Activated CD4-positive, alpha-beta memory T cell treated with anti-CD3 and anti-CD28 coated beads, Interleukin-2, amount 10 ng/mL, durations not matched to agents 7 days and 5 days (primary cell): ENCODE measurements at regions of chr14 and their contacts with region 1.

Region 1: GRCh38 chr14:102524466-102525218 is 15.1 kb upstream of the ANKRD9 start:
- DNase-seq: peak; percentile 97
- H3K4me3 Mint-ChIP-seq: peak overlapping the region; percentile 82
- H3K27ac Mint-ChIP-seq: peak overlapping the region; percentile 81
- H3K4me1 Mint-ChIP-seq: peaks cover 42% of the 10 kb centered on the region
- H3K27me3 Mint-ChIP-seq: no peaks in the 10 kb centered on the region

Region 2: GRCh38 chr14:102509744-102510615 is 14.7 kb before region 1 on chr14 and contains the start of gene ANKRD9:
- CTCF ChIA-PET with region 1: interaction called, 13 read pairs
- POLR2A ChIA-PET with region 1: interaction called, 4 read pairs
- DNase-seq: peak; percentile 92
- H3K4me3 Mint-ChIP-seq: peak within 1 kb of the TSS; percentile 75
- H3K27ac Mint-ChIP-seq: no peak within 1 kb of the TSS
- H3K4me1 Mint-ChIP-seq: peaks cover 17% of the 10 kb centered on the region
- H3K27me3 Mint-ChIP-seq: no peaks in the 10 kb centered on the region
- total RNA-seq, gene ANKRD9: 11.2 to 12.3 TPM

Region 3: DNA sequence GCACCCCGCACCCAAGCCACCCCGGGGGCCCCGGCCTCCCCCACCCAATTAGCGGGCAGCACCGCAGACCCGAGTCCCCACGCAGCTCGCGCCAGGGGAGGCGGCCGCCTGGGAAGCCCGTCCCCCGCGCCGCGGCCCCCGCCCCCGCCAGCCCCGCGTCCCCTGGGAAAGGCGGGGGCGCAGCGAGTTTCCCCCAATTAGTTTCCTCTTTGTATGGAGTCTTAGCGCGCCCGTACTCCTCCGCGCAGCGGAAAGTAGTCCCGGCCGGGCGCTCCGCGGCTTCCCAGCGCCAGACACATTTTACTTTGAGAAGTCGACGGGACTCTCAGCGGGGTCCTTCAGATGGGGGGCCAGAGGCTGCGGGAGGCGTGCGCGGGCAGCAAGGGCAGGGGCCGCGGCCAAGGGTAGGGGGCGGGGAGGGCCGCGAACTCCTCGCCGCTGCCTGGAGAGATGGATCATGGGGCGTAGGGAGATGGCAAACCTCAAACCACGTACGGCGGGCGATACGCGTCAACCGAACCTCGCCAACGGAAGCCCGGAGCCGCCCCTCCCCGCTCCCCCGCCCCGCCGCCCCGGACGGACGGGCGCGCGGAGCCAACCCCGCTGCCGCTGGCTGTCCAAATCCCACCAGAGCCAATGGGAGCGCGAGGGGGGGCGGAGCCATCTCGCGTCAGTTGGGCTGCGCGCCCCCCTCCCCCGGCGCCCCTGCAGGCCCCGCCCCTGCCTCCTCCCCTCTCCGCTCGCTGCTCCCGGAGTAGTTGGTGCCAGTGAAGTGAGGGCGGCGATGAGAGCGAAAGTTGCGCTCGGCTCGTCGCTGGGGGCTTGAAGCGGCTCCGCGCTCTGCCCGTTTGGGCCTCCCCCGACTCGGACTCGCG is 67.5 kb after region 1 on chr14 and contains the start of gene RCOR1:
- CTCF ChIA-PET with region 1: interaction called, 29 read pairs
- POLR2A ChIA-PET with region 1: interaction called, 23 read pairs
- DNase-seq: peak; percentile 98
- H3K4me3 Mint-ChIP-seq: peak within 1 kb of the TSS; percentile 91
- H3K27ac Mint-ChIP-seq: peak within 1 kb of the TSS; percentile 88
- H3K4me1 Mint-ChIP-seq: peaks cover 24% of the 10 kb centered on the region
- H3K27me3 Mint-ChIP-seq: no peaks in the 10 kb centered on the region
- total RNA-seq, gene RCOR1: 22.1 to 23.4 TPM